ENCODE measurements at regions of chr3 and their contacts with region 1.

Region 1: DNA sequence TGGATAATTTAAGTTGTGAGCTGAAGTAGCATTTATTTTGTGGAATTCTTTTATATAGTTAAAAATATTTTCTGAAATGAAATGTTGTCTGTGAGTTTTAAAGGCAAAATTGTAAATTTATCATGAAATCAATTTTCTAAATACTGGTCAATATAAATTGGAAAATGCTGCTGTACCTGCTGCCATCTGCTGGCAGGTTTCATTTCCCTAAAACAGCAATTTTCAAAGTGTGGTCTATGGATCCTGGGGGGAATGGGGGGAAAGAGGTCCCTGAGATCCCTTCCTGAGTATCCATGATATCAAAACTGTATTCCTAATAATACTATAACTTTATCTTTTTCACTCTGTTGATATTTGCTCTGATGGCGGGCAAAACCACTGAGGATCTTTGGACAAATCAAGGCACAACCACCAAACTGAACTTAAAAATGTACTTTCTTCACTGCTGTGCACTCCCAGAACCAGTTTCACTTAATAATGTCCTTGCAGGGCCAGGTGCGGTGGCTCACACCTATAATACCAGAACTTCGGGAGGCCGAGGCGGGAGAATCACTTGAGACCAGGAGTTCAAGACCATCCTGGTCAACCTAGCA is 17.2 kb upstream of the CCR4 start:
- DNase-seq: peak in 3 of 35 experiments; percentile 7 to 49 (median 22)
- ATAC-seq: no peak
- H3K4me3 ChIP-seq: no peak overlapping the region
- H3K4me3 Mint-ChIP-seq: no peak overlapping the region
- H3K27ac ChIP-seq: no peak overlapping the region
- H3K27ac Mint-ChIP-seq: no peak overlapping the region
- H3K4me1 ChIP-seq: no peaks in the 10 kb centered on the region
- H3K4me1 Mint-ChIP-seq: no peaks in the 10 kb centered on the region
- H3K27me3 ChIP-seq: peaks cover 0 to 9% of the 10 kb centered on the region in 2 experiments
- H3K27me3 Mint-ChIP-seq: peaks cover 0 to 10% of the 10 kb centered on the region in 2 donors

Region 2: GRCh38 chr3:32586356-32586755 is 347.9 kb before region 1 on chr3:
- CTCF ChIA-PET with region 1: interaction called in 1 of 2 experiments, 11 read pairs
- POLR2A ChIA-PET with region 1: no interaction called
- DNase-seq: no peak
- ATAC-seq: no peak
- H3K4me3 ChIP-seq: no peak overlapping the region
- H3K4me3 Mint-ChIP-seq: no peak overlapping the region
- H3K27ac ChIP-seq: no peak overlapping the region
- H3K27ac Mint-ChIP-seq: no peak overlapping the region
- H3K4me1 ChIP-seq: no peaks in the 10 kb centered on the region
- H3K4me1 Mint-ChIP-seq: no peaks in the 10 kb centered on the region
- H3K27me3 ChIP-seq: peaks cover 0 to 7% of the 10 kb centered on the region in 2 experiments
- H3K27me3 Mint-ChIP-seq: peaks cover 0 to 4% of the 10 kb centered on the region in 2 donors

Measured in T-cell (primary cell).